Endothelial cell of umbilical vein (primary cell): ENCODE measurements at regions of chr9 and their contacts with region 1.

Region 1: GRCh38 chr9:72526901-72527800 is 5.7 kb downstream of the TMC1 start:
- DNase-seq: peak; percentile 97
- H3K4me3 ChIP-seq: no peak overlapping the region
- H3K27ac ChIP-seq: peak overlapping the region; percentile 97
- H3K4me1 ChIP-seq: peaks cover 34% of the 10 kb centered on the region
- H3K27me3 ChIP-seq: no peaks in the 10 kb centered on the region
- CTCF ChIP-seq: no peak
- POLR2A ChIP-seq: no peak

Region 2: DNA sequence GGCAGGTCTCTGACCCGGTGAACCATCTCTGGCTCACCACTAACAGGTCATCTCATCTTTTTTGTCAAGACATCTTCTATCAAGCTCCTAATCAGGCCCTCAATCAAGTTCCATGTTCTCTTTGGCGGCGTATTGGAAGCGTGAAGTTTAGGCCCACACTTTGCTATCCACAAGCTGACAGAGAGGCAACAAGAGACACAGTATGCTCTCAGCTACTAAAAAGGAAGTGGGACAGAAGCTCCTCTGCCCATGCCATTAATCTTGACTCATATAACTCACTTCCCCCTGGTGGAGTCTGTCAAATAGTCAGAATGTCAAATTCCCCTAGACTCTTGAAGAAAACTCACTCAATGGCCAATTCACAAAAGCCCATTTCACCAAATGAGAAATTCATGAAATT is 83.3 kb before region 1 on chr9:
- CTCF ChIA-PET with region 1: interaction called, 3 read pairs
- POLR2A ChIA-PET with region 1: interaction called, 6 read pairs
- dilution Hi-C with region 1: no loop called
- intact Hi-C with region 1: loop called (anchors 1 kb)
- DNase-seq: no peak
- H3K4me3 ChIP-seq: no peak overlapping the region
- H3K27ac ChIP-seq: no peak overlapping the region
- H3K4me1 ChIP-seq: peaks cover 26% of the 10 kb centered on the region
- H3K27me3 ChIP-seq: no peaks in the 10 kb centered on the region
- CTCF ChIP-seq: no peak
- POLR2A ChIP-seq: no peak

Region 3: GRCh38 chr9:72478966-72479365 is 48.2 kb before region 1 on chr9:
- CTCF ChIA-PET with region 1: interaction called, 5 read pairs
- POLR2A ChIA-PET with region 1: no interaction called
- dilution Hi-C with region 1: no loop called
- intact Hi-C with region 1: loop called (anchors 1 kb)
- DNase-seq: peak; percentile 87
- H3K4me3 ChIP-seq: peak overlapping the region in 1 of 3 experiments; percentile 42
- H3K27ac ChIP-seq: peak overlapping the region; percentile 80
- H3K4me1 ChIP-seq: peaks cover 42% of the 10 kb centered on the region
- H3K27me3 ChIP-seq: no peaks in the 10 kb centered on the region
- CTCF ChIP-seq: no peak
- POLR2A ChIP-seq: no peak

Region 4: DNA sequence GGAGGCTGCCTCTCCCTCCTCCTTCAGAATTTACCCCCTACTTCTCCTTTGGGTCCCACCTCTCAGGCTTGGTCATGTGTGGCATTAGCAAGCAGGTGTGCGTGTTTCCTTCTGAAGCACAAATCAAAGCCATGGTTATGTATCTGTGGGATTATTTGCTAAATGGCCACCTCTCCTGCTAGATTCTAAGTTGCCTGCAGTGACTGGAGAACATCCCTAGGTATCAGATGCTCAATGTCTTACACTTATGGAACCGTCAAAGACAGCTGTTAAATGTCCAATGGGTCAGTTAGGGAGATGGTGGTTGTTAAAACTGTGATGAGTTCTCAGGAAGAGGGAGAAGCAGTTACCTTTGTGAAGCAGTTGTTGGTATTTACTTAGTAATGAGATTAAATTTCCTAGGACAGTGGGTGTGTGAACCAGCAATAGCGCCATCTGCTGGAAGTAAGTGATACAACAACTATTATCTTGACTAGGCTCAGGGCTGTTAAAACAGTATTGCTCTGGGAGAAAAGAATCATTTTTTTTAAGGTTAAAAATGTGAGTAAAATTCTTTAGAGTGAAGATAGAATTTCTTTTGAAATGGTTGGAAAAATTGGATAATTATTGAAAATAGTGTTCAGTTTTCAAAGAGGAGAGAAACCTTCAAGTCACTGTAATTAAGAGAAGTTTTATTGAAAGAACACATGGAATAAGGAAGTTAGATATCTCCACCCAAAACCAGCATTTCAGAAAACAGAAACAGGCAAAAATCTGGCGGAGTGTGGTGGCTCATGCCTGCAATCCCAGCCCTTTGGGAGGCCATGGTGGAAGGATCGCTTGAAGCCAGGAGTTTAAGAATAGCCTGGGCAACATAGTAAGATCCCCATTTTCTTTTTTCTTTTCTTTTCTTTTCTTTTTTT is 65.6 kb after region 1 on chr9:
- CTCF ChIA-PET with region 1: interaction called, 9 read pairs
- POLR2A ChIA-PET with region 1: no interaction called
- dilution Hi-C with region 1: no loop called
- intact Hi-C with region 1: loop called (anchors 1 kb)
- DNase-seq: peak; percentile 79
- H3K4me3 ChIP-seq: no peak overlapping the region
- H3K27ac ChIP-seq: no peak overlapping the region
- H3K4me1 ChIP-seq: no peaks in the 10 kb centered on the region
- H3K27me3 ChIP-seq: no peaks in the 10 kb centered on the region
- CTCF ChIP-seq: peak; percentile 47 to 57
- POLR2A ChIP-seq: no peak

Region 5: GRCh38 chr9:73132034-73132776 is 605.1 kb after region 1 on chr9:
- CTCF ChIA-PET with region 1: no interaction called
- POLR2A ChIA-PET with region 1: no interaction called
- dilution Hi-C with region 1: no loop called
- intact Hi-C with region 1: loop called (anchors 1 kb)
- DNase-seq: peak; percentile 94
- H3K4me3 ChIP-seq: peak overlapping the region; percentile 29 to 92 (median 84)
- H3K27ac ChIP-seq: peak overlapping the region; percentile 95
- H3K4me1 ChIP-seq: peaks cover 27% of the 10 kb centered on the region
- H3K27me3 ChIP-seq: no peaks in the 10 kb centered on the region
- CTCF ChIP-seq: no peak
- POLR2A ChIP-seq: peak; percentile 41